OCI-LY7 (cell line): ENCODE measurements at regions of chr4 and their contacts with region 1.

Region 1: DNA sequence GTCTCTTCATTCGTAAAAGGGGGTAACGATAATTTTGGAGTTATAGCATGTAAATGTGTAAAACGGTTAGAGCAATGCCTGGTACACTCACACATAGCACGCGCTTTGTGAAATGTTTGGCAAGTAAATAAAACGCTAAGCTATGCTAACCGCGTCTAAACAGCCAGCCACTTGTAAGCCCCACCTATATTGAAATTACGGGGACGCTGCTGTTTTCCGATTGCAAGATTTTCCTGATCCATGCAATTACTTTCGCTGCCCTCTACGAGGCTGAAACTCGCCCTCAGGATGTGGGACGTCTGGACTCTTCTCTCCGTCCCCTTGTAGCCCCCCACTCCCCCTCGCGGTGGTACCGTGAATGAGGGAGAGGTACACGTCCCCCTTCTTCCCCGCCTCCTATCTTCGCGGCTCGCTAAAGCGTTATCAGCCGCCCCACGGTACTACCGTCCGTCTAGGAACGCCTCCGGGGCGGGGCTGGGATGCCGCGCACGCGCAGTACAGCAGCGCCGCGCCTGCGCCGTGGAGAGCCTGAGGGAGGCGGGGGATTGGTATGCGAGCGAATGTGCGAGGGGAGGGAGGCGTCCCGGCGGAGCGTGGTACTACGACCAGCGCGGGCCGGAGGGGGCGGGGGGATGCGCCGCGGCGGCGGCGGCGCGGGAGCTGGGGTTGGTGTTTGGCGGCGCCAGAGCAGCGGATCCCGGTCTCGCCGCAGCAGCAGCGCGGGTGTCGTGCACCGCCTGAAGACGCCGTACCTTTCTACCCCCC is at the start of gene STIM2:
- DNase-seq: peak; percentile 98
- H3K4me3 ChIP-seq: peak within 1 kb of the TSS; percentile 93
- H3K27ac ChIP-seq: peak within 1 kb of the TSS; percentile 87
- H3K4me1 ChIP-seq: peaks cover 33% of the 10 kb centered on the region
- CTCF ChIP-seq: peak; percentile 76
- total RNA-seq, gene STIM2: 108 and 122 TPM in 2 replicates

Region 2: DNA sequence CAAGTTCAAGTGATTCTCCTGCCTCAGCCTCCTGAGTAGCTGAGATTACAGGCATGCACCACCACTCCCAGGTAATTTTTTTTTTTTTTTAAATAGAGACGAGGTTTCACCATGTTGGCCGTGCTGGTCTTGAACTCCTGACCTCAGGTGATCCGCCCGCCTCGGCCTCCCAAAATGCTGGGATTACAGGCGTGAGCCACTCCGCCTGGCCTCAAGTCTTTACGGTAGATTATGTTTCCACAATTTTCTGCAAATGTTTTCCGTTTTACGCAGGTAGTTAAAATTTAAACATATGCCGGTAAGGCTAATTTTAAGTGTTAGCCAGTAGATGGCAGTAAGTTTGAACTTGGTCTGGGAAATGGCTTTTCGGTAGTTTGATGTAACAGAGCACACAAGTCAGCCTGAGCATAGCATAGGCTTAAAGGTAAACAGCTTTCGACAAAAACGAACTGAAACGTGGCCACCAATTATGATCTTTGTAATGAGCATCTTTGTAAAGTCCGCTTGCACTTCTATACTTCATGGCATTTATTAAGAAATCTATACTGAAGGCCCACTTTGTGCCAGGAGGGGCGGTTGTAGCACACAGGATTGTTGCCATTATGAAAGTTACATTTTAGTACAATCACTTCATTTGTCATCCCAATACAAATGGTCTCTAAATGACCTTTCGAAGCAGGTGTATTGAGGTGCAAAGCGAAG is 401.1 kb before region 1 on chr4:
- CTCF ChIA-PET with region 1: no interaction called
- POLR2A ChIA-PET with region 1: no interaction called
- intact Hi-C with region 1: loop called (anchors 1 kb)
- DNase-seq: peak; percentile 76
- H3K4me3 ChIP-seq: no peak overlapping the region
- H3K27ac ChIP-seq: no peak overlapping the region
- H3K4me1 ChIP-seq: peaks cover 12% of the 10 kb centered on the region
- CTCF ChIP-seq: peak; percentile 85

Region 3: GRCh38 chr4:26583865-26584652 is 276.3 kb before region 1 on chr4 and contains the start of gene TBC1D19:
- CTCF ChIA-PET with region 1: interaction called, 3 read pairs
- POLR2A ChIA-PET with region 1: interaction called, 5 read pairs
- intact Hi-C with region 1: loop called (anchors 1 kb)
- DNase-seq: peak; percentile 93
- H3K4me3 ChIP-seq: peak within 1 kb of the TSS; percentile 86
- H3K27ac ChIP-seq: peak within 1 kb of the TSS; percentile 48
- H3K4me1 ChIP-seq: peaks cover 25% of the 10 kb centered on the region
- CTCF ChIP-seq: no peak; the same call in 1 of the 2 replicates
- total RNA-seq, gene TBC1D19: 9.8 and 11.0 TPM in 2 replicates

Region 4: GRCh38 chr4:26787461-26788340 is 72.6 kb before region 1 on chr4:
- CTCF ChIA-PET with region 1: no interaction called
- POLR2A ChIA-PET with region 1: interaction called, 6 read pairs
- intact Hi-C with region 1: loop called (anchors 1 kb)
- DNase-seq: peak; percentile 88
- H3K4me3 ChIP-seq: peak overlapping the region; percentile 59
- H3K27ac ChIP-seq: peak overlapping the region; percentile 84
- H3K4me1 ChIP-seq: peaks cover 42% of the 10 kb centered on the region
- CTCF ChIP-seq: peak; percentile 86

Region 5: GRCh38 chr4:26871606-26872005 is 11.3 kb after region 1 on chr4:
- CTCF ChIA-PET with region 1: no interaction called
- POLR2A ChIA-PET with region 1: interaction called, 13 read pairs
- intact Hi-C with region 1: no loop called
- DNase-seq: no peak
- H3K4me3 ChIP-seq: no peak overlapping the region
- H3K27ac ChIP-seq: no peak overlapping the region
- H3K4me1 ChIP-seq: peaks cover 59% of the 10 kb centered on the region
- CTCF ChIP-seq: no peak

Region 6: DNA sequence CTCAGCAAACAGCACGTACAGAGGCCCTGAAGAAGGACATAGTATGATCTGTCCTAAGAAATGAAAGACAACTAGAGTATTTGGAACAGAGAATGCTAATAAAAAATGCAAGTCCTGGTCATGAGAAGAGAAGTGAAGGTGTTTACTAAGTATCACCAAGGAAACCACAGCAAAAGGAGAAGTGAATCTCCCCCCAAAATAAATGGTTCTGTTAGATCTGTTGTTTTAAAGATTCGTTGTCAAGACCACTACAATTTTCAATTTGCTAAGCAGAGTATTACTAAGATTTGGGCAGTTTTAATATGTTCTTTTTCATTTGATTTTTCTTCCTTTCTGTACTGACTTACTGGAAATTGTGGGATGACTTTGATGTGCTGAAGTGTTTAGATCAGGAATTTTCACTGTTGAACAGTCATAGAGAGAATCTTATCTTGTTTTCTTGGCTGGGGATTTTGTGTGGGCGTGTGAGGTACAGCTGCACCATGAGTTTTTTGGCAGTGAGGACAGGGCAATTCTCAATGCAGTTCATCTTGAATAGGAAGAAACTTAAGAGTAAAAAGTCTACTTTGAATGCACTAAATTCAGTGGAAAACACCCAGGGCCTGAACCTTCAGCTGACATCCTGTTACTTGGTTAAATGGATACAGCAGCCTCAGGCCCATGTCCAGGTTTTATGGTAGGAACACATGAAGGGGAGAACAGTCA is 132.5 kb after region 1 on chr4:
- CTCF ChIA-PET with region 1: no interaction called
- POLR2A ChIA-PET with region 1: interaction called, 50 read pairs
- intact Hi-C with region 1: no loop called
- DNase-seq: peak; percentile 89
- H3K4me3 ChIP-seq: peak overlapping the region; percentile 49
- H3K27ac ChIP-seq: peak overlapping the region; percentile 89
- H3K4me1 ChIP-seq: peaks cover 59% of the 10 kb centered on the region
- CTCF ChIP-seq: no peak

Region 7: DNA sequence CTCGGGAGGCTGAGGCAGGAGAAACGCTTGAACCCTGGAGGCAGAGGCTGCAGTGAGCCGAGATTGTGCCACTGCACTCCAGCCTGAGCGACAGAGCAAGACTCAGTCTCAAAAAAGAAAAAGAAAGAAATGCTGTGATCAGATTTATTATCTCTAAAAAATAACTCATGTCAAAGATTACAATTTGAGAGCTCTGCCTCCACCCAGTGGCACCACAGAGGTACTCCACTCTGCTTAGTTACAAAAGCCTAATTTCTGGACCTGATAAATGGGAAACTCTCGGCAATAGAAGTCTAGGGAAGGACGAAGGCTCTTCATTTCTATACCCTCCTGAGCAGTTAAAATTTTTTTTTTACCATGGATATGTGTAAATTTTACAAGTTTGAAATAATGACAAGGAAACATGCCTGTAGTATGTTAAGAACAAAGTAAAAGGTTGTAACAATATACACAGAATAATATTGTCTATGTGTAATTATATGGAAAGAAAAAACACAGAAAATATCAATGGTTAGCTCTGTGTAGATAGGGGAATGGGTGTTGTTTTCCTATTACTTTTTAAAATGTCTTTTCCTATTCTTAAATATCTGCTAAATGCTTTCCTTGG is 150.1 kb after region 1 on chr4:
- CTCF ChIA-PET with region 1: no interaction called
- POLR2A ChIA-PET with region 1: interaction called, 130 read pairs
- intact Hi-C with region 1: loop called (anchors 1 kb)
- DNase-seq: peak; percentile 78
- H3K4me3 ChIP-seq: no peak overlapping the region
- H3K27ac ChIP-seq: peak overlapping the region; percentile 44
- H3K4me1 ChIP-seq: peaks cover 74% of the 10 kb centered on the region
- CTCF ChIP-seq: peak; percentile 94